Heart right ventricle (tissue), 16 donors: ENCODE measurements at regions of chr16 and their contacts with region 1.

Region 1: DNA sequence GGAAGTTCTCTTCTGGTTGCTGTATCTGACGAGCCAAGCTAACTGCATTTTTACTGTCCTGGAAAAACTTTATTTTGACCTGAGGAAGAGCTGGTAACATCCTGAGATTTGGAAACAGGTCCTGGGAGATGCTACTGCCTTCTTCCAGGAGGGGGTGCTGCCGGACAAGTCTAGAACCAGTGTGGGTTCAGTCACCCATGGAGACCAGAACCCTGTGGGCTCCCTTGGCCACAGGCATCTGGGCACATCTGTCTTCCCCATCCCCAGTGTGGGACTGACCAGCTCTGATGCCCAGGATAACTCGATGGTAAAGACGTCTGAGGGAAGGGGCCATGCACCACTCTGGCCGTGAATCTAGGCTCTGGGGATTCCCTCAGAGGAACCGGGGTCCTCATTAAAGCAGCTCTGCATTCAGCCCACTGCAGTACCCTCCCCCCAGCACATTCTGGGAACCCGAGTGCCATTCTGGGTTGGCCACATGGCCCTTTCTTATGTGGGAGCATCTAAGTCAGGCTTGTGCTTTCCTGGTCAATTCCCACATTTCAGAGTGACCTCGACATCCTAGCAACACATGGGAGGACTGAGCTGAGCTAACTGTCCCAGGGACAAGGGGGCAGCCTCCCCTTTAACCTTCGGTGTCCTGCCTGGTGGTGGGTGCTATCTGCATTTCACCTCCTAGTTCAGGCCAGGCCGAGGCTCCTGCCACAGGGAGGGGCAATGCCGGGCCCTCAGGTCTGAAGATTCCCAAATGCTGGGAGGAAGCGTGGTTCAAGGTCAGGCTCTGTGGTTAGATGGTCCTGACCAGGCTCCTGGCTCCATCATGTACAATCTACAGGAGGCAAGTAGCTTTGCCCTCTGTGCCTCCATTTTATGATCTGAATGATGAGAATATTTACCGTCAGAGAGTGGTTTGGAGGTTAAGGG is 6.4 kb downstream of the C16orf86 start:
- DNase-seq: peak; percentile 66 to 77
- ATAC-seq: peak; percentile 41 to 82 (median 62)
- H3K4me3 ChIP-seq: no peak overlapping the region
- H3K27ac ChIP-seq: peak overlapping the region; percentile 61 to 89 (median 81)
- H3K4me1 ChIP-seq: peaks cover 13 to 56% (median 31%) of the 10 kb centered on the region in 9 donors
- H3K27me3 ChIP-seq: no peaks in the 10 kb centered on the region
- CTCF ChIP-seq: peak; percentile 57 to 86 (median 77)

Region 2: GRCh38 chr16:67521095-67521804 is 151.8 kb before region 1 on chr16:
- intact Hi-C with region 1: loop called in 7 of 10 experiments (anchors 1 to 5 kb)
- DNase-seq: peak; percentile 95 to 97
- ATAC-seq: peak; percentile 91 to 97 (median 94)
- H3K4me3 ChIP-seq: peak overlapping the region in 9 of 10 donors; percentile 14 to 55 (median 52)
- H3K27ac ChIP-seq: peak overlapping the region in 9 of 10 donors; percentile 74 to 95 (median 87)
- H3K4me1 ChIP-seq: peaks cover 0 to 22% (median 12%) of the 10 kb centered on the region in 9 donors
- H3K27me3 ChIP-seq: no peaks in the 10 kb centered on the region
- CTCF ChIP-seq: peak; percentile 71 to 90 (median 77)

Region 3: GRCh38 chr16:67719048-67719777 is 46.2 kb after region 1 on chr16 and contains the start of gene GFOD2:
- intact Hi-C with region 1: loop called in 5 of 10 experiments (anchors 2 to 5 kb)
- DNase-seq: peak; percentile 98 to 99
- ATAC-seq: peak; percentile 99 to 100 (median 99)
- H3K4me3 ChIP-seq: peak within 1 kb of the TSS; percentile 81 to 100 (median 93)
- H3K27ac ChIP-seq: peak within 1 kb of the TSS; percentile 76 to 97 (median 92)
- H3K4me1 ChIP-seq: peaks cover 0 to 34% (median 24%) of the 10 kb centered on the region in 9 donors
- H3K27me3 ChIP-seq: no peaks in the 10 kb centered on the region
- CTCF ChIP-seq: peak in 1 of 9 donors; percentile 14
- total RNA-seq, gene GFOD2: 6.0 to 10.7 (median 8.2) TPM

Region 4: DNA sequence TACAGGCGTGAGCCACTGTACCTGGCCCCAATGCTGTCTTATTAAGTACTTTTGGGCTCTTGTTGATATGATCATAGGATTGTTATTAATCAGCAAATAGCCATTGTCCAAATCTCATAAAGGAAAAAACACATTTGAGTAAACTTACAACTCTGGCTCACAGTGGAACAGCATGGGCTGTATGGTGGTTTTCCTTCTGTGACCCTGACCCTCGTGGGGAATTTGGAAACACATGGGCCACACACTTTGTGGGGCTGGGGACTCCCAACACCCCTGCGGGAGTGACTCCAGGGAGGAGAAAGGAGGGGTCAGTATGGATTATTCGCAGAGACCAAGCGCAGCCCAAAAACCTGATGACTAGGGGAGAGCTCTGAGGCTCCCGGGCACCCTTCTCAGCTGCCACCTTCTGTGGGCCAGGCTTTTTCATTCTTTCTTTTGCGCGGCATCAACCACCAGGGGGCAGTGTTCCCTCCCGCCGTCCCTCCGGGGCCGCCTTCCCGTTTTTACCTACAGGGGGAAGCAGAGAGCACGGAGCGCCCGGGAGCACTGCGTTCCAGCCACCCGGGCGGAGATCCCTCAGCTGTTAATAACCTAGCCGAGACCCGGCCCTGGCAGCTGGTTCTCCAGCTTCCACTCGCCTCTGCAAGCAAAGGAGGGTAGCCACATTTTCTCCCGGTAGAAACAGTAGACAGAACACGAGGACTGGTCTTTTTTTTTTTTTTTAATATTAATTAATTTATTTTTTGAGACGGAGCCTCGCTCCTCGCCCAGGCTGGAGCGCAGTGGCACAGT is 143.4 kb after region 1 on chr16:
- intact Hi-C with region 1: loop called in 3 of 10 experiments (anchors 5 to 10 kb)
- DNase-seq: peak; percentile 83 to 86
- ATAC-seq: peak; percentile 87 to 97 (median 95)
- H3K4me3 ChIP-seq: no peak overlapping the region
- H3K27ac ChIP-seq: peak overlapping the region in 1 of 10 donors; percentile 55
- H3K4me1 ChIP-seq: peaks cover 0 to 7% (median 0%) of the 10 kb centered on the region in 9 donors
- H3K27me3 ChIP-seq: no peaks in the 10 kb centered on the region
- CTCF ChIP-seq: peak in 8 of 9 donors; percentile 100

Region 5: DNA sequence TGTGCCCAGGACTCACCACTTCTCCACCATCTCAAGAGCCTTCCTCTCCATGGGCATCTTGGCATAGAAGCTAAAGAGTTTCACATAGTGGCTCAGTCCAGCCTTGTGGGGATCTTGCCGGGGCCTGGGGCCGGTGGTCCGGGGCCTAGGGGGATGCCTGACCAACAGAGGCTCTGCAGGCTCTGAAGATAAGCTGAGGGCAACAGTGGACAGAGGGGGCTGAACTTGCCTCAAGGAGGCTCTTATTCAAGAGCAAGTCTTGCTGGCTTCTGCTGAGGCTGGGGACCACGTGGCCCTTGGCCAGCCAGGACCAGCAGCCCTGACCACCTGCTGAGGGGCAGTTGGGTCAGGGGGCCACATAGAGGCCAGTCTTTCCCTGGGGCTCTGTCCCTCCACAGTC is 155.7 kb after region 1 on chr16:
- intact Hi-C with region 1: no loop called
- DNase-seq: no peak
- ATAC-seq: no peak
- H3K4me3 ChIP-seq: no peak overlapping the region
- H3K27ac ChIP-seq: no peak overlapping the region
- H3K4me1 ChIP-seq: peaks cover 0 to 21% (median 9%) of the 10 kb centered on the region in 9 donors
- H3K27me3 ChIP-seq: no peaks in the 10 kb centered on the region
- CTCF ChIP-seq: no peak

Region 6: DNA sequence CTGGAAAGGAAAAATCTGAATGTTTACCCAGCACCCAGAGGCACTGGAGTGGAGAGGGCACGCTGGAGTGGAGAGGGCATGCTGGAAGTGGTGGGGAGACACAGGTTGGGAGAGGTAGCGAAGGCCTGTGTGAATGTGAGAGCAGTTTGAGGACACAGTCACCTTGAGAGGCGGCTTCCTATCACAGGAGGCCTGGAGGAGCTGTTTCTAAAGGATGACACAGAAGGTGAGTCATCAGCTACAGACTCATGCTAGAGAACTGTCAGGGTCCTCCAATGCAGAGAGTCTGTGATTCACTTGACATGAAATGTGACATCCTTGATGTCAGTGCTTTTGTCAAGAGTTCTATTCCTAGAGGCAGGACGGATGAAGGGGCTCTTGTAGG is 244.8 kb after region 1 on chr16:
- intact Hi-C with region 1: loop called in 3 of 10 experiments (anchors 5 to 10 kb)
- DNase-seq: no peak
- ATAC-seq: peak in 5 of 8 donors; percentile 8 to 73 (median 36)
- H3K4me3 ChIP-seq: no peak overlapping the region
- H3K27ac ChIP-seq: peak overlapping the region in 9 of 10 donors; percentile 17 to 83 (median 53)
- H3K4me1 ChIP-seq: peaks cover 25 to 82% (median 61%) of the 10 kb centered on the region in 9 donors
- H3K27me3 ChIP-seq: no peaks in the 10 kb centered on the region
- CTCF ChIP-seq: no peak

Region 7: DNA sequence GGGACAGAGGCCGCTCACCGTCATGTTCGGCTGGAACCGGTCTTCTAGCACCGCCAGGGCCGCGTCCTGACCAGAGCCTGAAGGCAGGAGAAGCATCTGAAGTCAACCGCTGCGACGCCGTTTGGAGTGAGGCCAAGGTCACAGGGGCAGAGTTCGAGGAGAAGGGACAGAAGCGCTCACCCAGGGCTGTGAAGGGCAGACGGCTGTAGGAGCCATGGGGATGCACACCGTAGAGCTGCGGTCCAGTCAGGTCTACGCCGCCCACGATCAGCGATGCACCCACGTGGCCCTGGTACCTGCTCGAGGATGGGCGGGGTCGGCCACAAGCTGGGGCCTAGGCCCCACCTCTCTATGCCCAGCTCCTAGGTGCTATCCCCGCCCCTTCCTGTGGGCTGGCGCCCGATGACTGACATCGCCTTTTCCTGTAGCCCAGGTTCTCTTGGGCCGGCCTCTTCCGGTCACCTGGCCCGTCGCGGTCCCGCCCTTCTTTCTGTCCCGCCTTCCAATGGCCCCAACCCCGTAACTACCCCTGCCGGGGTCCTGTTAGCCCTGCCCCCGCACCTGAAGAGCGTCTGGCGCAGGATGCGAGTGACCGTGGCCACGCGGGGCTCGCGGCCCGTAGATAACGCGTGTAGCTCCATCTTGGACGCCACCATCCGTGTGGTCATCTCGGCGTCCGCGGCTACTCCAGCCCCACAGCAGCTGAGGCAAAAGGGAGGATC is 262.6 kb after region 1 on chr16:
- intact Hi-C with region 1: loop called in 1 of 10 experiments (anchors 5 kb)
- DNase-seq: peak; percentile 92 to 94
- ATAC-seq: peak; percentile 90 to 95 (median 92)
- H3K4me3 ChIP-seq: peak overlapping the region; percentile 70 to 96 (median 86)
- H3K27ac ChIP-seq: peak overlapping the region; percentile 70 to 98 (median 95)
- H3K4me1 ChIP-seq: peaks cover 4 to 40% (median 33%) of the 10 kb centered on the region in 9 donors
- H3K27me3 ChIP-seq: no peaks in the 10 kb centered on the region
- CTCF ChIP-seq: peak in 1 of 9 donors; percentile 5

Region 8: DNA sequence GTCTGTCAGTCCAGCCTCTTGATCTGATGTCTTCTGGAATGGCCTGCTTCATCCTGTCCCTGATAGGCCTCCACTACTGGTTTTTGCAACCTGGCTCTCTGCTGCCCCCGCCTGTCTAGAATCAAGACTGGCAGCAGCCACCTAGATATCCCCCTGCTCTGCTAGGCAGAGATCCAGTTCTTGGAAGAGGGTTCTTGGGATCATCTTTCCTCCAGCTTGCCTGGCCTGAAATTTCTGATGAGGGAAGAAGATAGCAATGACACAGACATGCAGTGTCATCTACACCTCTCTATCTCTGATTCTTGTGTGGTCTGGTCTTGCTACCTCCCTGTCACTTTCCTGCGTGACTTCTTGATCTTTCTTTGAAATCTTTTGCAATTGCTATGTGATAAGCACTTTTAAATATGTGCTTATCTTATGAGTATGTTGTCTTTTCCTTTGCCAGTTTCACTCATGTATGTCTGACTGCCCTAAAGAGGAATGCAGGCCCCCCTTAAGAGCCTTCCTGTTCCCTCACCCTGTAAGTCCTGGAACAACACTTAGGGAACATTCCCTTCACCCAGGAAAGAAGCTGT is 391.9 kb after region 1 on chr16:
- intact Hi-C with region 1: loop called in 3 of 10 experiments (anchors 5 to 10 kb)
- DNase-seq: peak; percentile 66 to 77
- ATAC-seq: peak; percentile 75 to 85 (median 80)
- H3K4me3 ChIP-seq: no peak overlapping the region
- H3K27ac ChIP-seq: peak overlapping the region in 6 of 10 donors; percentile 12 to 75 (median 30)
- H3K4me1 ChIP-seq: peaks cover 5 to 62% (median 26%) of the 10 kb centered on the region in 9 donors
- H3K27me3 ChIP-seq: no peaks in the 10 kb centered on the region
- CTCF ChIP-seq: peak; percentile 64 to 89 (median 81)